Panc1 (cell line): ENCODE measurements at regions of chr19 and their contacts with region 1.

Region 1: GRCh38 chr19:45729774-45730388 is 815 bp downstream of the FBXO46 start:
- DNase-seq: no peak
- ATAC-seq: peak; percentile 33
- H3K4me3 ChIP-seq: peak overlapping the region; percentile 76 to 84
- H3K27ac ChIP-seq: peak overlapping the region; percentile 85
- H3K4me1 ChIP-seq: no peaks in the 10 kb centered on the region
- H3K27me3 ChIP-seq: no peaks in the 10 kb centered on the region
- CTCF ChIP-seq: no peak

Region 2: DNA sequence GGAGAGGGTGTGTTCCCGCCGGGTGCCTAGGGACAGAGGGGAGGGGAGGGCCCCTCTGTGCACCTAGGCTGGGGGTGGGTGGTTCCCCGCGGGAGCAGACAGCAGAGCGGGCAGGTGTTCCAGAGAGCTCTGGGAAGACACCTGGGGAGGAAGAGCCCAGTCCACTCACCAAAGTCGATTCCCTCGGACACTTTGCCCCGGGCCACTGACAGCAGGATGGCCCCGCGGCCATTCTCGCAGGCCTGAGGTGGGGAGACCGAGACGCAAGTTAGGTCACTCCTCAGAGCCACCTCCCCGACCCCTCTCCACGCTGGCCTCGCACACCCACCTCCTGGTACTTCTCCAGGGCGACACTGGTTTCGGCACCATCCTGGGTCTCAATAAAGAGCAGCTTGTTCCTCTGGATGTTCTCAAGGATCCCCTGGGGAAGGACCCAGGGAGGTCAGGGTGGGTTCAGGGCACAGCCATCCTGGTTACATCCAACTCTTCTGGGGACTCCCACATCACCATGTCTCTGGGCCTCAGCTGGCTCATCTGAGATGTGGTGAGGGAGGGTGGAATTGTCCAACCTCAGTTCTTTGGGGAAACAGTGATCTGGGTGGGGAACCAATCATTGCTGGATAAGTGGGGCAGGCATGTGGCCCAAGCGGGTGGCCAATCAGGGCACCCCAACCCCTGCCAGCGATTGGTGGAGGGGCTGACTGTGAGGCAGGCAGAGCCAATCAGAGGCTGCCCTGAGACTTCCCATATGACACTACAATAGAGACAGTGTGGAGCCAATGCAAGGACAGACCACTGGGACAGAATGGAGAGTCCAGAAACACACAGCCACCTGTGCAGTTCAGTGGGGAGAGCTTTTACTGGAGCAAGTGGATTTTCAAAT is 376.7 kb before region 1 on chr19:
- CTCF ChIA-PET with region 1: no interaction called
- POLR2A ChIA-PET with region 1: no interaction called
- in situ Hi-C with region 1: no loop called
- intact Hi-C with region 1: no loop called
- DNase-seq: no peak
- ATAC-seq: no peak
- H3K4me3 ChIP-seq: no peak overlapping the region
- H3K27ac ChIP-seq: no peak overlapping the region
- H3K4me1 ChIP-seq: no peaks in the 10 kb centered on the region
- H3K27me3 ChIP-seq: no peaks in the 10 kb centered on the region
- CTCF ChIP-seq: no peak

Region 3: DNA sequence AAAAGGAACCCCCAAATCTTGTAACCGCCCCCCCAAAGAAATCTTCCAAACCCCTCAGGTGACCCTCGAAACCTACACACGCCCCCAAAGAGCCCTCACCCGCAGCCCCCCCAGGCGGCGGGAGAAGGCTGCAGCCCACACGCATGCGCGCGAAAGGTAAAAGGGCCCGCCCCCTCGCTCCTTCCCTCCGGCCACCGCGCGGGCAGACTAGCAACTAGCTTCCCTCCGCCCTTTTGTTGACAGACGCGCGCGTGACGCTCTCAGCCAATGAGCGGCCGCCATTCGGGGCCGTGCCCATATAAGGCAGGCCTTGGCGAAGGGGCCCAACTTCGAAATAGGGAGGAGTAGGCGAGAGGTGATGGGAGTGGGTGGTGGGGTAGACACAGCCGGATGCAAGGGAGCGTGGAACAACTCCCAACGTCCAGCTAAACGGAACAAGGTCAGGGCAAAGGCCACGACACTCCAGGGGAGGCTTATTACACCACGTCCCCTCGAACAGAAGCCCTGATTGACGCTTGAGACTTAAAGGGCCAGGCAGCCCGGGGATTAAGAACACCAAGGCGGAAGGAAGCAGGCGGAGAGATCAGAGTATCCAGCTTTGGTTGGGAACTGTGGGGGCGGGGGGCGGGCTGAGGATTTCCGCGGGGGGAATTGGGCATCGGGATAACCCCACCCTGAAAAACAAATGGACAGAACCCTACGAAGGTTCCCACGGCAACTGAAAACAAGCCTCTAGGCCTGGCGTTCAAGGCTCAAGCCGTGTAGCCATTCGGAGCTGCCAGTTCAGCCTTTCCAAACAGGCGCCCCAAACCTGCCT is 12.5 kb before region 1 on chr19:
- CTCF ChIA-PET with region 1: no interaction called
- POLR2A ChIA-PET with region 1: no interaction called
- in situ Hi-C with region 1: no loop called
- intact Hi-C with region 1: no loop called
- DNase-seq: peak; percentile 97
- ATAC-seq: peak; percentile 96
- H3K4me3 ChIP-seq: peak overlapping the region; percentile 72 to 92
- H3K27ac ChIP-seq: peak overlapping the region; percentile 96
- H3K4me1 ChIP-seq: peaks cover 15% of the 10 kb centered on the region
- H3K27me3 ChIP-seq: no peaks in the 10 kb centered on the region
- CTCF ChIP-seq: no peak

Region 4: DNA sequence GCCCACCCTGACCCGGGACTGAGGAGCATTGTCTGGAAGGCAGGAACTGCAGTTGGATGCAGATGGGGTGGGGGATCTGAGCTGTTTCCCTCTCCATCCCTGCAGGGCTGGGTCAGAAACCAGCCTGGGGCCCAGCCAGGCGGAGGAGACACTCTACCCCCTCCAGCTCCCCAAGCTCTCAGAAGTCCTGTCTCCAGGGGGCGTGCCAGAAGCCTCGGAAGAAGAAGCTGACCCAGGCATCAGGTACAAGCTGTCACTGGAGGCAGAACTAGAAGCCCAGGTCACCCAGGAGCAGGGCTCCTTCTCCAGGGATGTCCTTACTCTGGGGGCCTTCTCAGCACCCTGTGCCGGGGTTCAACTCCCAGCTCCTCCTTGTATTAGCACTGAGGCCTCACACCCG is 23.7 kb after region 1 on chr19:
- CTCF ChIA-PET with region 1: no interaction called
- POLR2A ChIA-PET with region 1: interaction called, 14 read pairs
- in situ Hi-C with region 1: no loop called
- intact Hi-C with region 1: no loop called
- DNase-seq: no peak
- ATAC-seq: no peak
- H3K4me3 ChIP-seq: no peak overlapping the region
- H3K27ac ChIP-seq: no peak overlapping the region
- H3K4me1 ChIP-seq: no peaks in the 10 kb centered on the region
- H3K27me3 ChIP-seq: no peaks in the 10 kb centered on the region
- CTCF ChIP-seq: no peak